Ascending aorta (tissue), 2 donors: ENCODE measurements at regions of chr9 and their contacts with region 1.

Region 1: DNA sequence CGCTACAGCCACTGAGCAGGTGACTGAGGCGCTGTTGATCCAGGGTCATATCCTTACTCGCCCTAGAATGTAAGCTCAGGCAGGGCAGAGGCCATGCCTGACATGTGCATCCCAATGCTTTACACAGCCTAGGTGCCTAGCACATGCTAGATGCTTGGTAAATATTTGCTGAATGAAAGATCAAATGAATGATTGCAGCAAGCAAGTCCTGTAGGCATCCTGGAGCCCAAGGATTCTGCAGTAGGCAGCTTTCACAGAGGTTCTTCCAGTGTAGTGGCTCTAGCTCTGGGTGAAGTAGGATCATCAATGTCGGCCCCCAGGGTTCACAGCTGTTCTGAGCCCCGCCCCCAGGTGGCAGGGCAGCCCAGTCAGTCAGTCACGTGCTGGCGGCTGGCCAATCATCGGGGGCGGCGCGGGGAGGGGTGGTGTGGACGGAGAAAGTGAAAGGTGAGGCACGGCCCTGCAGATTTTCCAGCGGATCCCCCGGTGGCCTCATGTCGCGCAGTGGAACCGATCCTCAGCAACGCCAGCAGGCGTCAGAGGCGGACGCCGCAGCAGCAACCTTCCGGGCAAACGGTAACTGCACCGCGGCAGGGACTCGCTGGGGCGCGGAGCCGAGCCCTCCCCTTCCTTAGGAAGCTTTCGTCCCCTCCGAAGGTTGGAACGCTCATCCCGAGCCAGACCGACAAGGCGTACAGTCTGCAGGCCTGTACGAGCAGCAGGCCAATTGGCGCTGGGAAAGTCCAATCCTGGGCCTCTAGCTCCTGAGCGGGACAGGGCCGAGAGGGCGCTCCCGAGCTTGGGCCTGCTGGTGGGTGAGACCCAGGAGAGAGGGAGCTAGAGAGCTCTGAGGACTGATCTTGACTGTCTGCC is at the start of gene GALT:
- DNase-seq: peak; percentile 90 to 97
- H3K4me3 ChIP-seq: peak within 1 kb of the TSS; percentile 69 to 80
- H3K27ac ChIP-seq: peak within 1 kb of the TSS; percentile 80 to 83
- H3K4me1 ChIP-seq: peaks cover 17 to 26% of the 10 kb centered on the region in 2 donors
- H3K27me3 ChIP-seq: no peaks in the 10 kb centered on the region
- CTCF ChIP-seq: peak; percentile 26 to 51 (median 35)
- total RNA-seq, gene GALT: 28.3 TPM

Region 2: DNA sequence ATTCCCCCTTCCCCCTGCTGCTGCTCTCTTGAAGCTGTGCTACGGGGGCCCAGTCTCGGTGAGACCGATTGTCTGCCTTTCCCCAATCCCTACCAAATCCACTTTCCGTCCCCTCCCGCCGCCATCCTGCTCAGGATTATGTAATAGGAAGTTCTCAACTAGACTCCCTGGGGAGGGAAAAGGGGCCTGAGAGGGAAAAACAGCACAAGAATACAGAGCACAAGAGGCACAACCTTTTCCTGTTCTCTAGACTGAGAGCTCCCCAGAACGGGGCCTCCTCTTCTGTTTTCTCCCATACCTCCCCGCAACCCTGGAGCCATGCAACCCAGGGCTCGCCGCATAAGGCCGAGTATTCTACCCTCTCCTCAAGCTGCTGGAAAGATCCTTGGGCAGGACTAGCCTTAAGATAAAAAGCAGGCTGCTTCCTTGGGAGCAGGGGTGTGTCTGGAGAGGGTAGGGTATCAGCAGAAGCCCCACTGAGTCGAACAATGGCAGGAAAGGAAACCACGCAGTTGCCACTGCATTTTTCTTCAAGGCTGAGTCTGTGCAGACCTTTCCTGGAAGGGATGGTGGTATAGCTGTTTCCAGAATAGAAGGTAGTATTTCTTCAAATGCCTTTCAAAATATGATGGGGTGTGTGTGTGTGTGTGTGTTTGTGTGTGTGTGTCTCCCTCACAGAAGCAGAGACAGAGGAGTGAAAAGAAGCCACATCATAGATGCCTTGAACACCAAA is 282.7 kb before region 1 on chr9:
- intact Hi-C with region 1: no loop called
- DNase-seq: peak in 1 of 2 donors; percentile 30
- H3K4me3 ChIP-seq: no peak overlapping the region
- H3K27ac ChIP-seq: no peak overlapping the region
- H3K4me1 ChIP-seq: no peaks in the 10 kb centered on the region
- H3K27me3 ChIP-seq: no peaks in the 10 kb centered on the region
- CTCF ChIP-seq: no peak

Region 3: GRCh38 chr9:34620061-34620994 is 26.1 kb before region 1 on chr9 and contains the start of gene DCTN3:
- intact Hi-C with region 1: loop called (anchors 2 kb)
- DNase-seq: peak; percentile 75 to 98
- H3K4me3 ChIP-seq: peak within 1 kb of the TSS; percentile 73 to 76
- H3K27ac ChIP-seq: no peak within 1 kb of the TSS
- H3K4me1 ChIP-seq: peaks cover 0 to 13% of the 10 kb centered on the region in 2 donors
- H3K27me3 ChIP-seq: no peaks in the 10 kb centered on the region
- CTCF ChIP-seq: peak in 1 of 3 experiments; percentile 3
- total RNA-seq, gene DCTN3: 31.7 TPM